Psoas muscle (tissue), 8 donors: ENCODE measurements at regions of chr2 and their contacts with region 1.

Region 1: DNA sequence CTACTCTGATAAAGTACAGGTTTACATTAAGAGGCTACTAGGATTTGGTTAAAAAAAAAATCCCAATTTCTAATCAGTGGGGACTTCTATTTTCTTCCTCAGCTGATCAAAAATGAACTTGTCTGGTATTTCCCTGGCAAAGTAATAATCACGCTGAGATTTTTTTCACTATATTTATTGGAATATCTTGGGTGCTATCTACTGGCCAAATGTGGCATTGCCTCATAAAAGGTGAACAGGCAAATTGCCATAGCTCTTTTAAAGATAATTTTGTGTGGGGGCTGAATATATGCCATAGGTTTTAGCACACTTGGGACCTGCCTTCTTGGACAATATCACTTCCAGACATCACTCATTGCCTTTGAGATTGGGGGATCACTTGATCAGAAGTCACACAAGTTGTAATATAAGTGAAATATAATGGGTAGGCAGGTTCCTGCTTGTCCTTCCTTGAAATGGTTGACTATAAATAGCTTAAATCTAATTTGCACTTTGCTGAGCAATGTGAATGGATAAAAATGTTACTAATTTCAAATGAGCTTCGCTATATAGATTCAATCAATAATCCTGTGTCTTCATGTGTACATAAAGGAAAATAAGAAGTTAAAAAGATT is 7.0 kb upstream of the NXPH2 start:
- DNase-seq: no peak
- ATAC-seq: peak in 2 of 4 donors; percentile 48 to 60
- H3K4me3 ChIP-seq: no peak overlapping the region
- H3K27ac ChIP-seq: no peak overlapping the region
- H3K4me1 ChIP-seq: no peaks in the 10 kb centered on the region
- H3K27me3 ChIP-seq: no peaks in the 10 kb centered on the region
- CTCF ChIP-seq: peak; percentile 73

Region 2: DNA sequence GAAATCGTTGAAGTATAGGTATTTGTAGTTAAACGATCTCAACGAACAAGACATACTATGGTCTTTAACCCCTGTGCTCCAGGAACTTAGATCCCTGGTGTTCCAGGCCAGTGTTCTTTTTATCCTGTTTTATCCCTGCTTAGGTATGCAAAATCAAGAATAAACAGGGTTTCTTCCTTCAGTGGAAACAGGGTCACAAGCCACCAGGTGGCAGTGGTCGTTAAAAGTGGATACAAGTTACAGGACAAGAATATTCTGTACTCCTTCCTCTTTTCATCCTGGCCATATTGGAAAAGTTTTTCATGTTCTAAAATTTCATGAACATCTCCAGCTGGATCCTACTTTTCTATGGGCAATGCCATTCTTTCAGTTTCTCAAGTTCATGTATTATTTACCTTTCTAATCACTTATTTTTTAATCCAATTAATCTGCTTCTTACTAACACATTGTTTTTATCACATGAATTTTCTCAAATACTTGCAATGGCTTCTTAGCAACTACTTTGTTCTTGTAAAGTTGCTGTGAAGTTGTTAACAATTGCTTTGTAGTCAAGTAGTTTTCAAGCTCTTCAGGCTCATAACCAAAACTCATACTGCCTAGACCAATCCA is 839.3 kb before region 1 on chr2:
- intact Hi-C with region 1: loop called in 1 of 2 experiments (anchors 10 kb)
- DNase-seq: peak; percentile 64 to 76
- ATAC-seq: peak in 2 of 4 donors; percentile 50 to 61
- H3K4me3 ChIP-seq: no peak overlapping the region
- H3K27ac ChIP-seq: no peak overlapping the region
- H3K4me1 ChIP-seq: no peaks in the 10 kb centered on the region
- H3K27me3 ChIP-seq: no peaks in the 10 kb centered on the region
- CTCF ChIP-seq: peak; percentile 58

Region 3: GRCh38 chr2:138373993-138374408 is 413.2 kb before region 1 on chr2:
- intact Hi-C with region 1: loop called in 1 of 2 experiments (anchors 10 kb)
- DNase-seq: no peak
- ATAC-seq: peak in 1 of 4 donors; percentile 57
- H3K4me3 ChIP-seq: no peak overlapping the region
- H3K27ac ChIP-seq: no peak overlapping the region
- H3K4me1 ChIP-seq: no peaks in the 10 kb centered on the region
- H3K27me3 ChIP-seq: no peaks in the 10 kb centered on the region
- CTCF ChIP-seq: peak; percentile 59

Region 4: DNA sequence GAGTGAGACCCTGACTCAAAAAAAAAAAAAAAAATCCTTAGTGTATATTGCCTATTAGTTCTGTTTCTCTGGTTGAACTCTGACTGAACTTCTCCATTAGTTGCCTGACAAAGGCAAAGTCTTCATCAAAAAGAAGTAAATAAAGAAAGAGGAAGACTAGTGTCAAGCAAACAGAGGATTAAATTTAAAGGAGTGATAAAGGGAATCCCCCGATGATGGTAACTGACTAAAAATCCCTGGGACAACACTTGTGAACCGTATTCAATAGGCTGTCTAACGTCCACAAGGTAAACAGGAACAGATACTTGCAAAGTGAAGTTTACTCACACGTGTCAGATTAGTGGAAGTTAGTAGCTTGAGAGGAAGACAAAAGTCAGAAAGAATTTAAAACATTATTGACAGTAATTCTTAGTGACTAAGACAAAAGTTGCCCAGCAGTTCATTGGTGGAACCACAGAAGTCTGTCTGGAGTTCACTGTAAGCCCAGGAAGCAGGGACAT is 311.8 kb before region 1 on chr2:
- intact Hi-C with region 1: loop called in 1 of 2 experiments (anchors 10 kb)
- DNase-seq: no peak
- ATAC-seq: no peak
- H3K4me3 ChIP-seq: no peak overlapping the region
- H3K27ac ChIP-seq: no peak overlapping the region
- H3K4me1 ChIP-seq: no peaks in the 10 kb centered on the region
- H3K27me3 ChIP-seq: no peaks in the 10 kb centered on the region
- CTCF ChIP-seq: no peak

Region 5: DNA sequence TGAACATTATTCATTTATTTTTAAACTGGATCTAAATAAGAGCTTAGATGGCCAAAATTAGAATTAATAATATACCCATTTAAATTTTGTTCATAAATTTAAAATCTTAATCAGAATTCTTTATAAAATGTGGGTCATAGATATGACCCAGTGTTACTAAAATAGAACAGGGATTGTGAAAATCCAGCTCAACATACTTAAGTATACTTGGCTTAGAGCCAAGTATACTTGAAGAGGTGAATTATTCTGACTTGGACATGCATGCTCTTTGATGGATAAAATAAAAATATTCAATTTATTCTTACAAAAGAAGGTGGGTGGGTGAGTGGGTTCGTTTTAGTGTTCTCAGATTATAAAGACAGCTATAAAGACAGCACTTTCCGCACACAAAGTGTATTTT is 214.8 kb before region 1 on chr2:
- intact Hi-C with region 1: no loop called
- DNase-seq: no peak
- ATAC-seq: peak in 1 of 4 donors; percentile 50
- H3K4me3 ChIP-seq: no peak overlapping the region
- H3K27ac ChIP-seq: no peak overlapping the region
- H3K4me1 ChIP-seq: peaks cover 8% of the 10 kb centered on the region
- H3K27me3 ChIP-seq: no peaks in the 10 kb centered on the region
- CTCF ChIP-seq: no peak